A549 (cell line): ENCODE measurements at regions of chr6 and their contacts with region 1.

Region 1: GRCh38 chr6:14210663-14211561 is 93.3 kb downstream of the CD83 start:
- DNase-seq: peak; percentile 76 to 84
- ATAC-seq: peak; percentile 96
- H3K4me3 ChIP-seq: peak overlapping the region; percentile 56
- H3K27ac ChIP-seq: peak overlapping the region; percentile 88 to 93
- H3K4me1 ChIP-seq: peaks cover 30% of the 10 kb centered on the region
- CTCF ChIP-seq: peak; percentile 85
- EP300 ChIP-seq: no peak
- POLR2A ChIP-seq: peak; percentile 62
- RAD21 ChIP-seq: peak; percentile 67 to 97

Region 2: GRCh38 chr6:14089224-14089623 is 121.7 kb before region 1 on chr6:
- CTCF ChIA-PET with region 1: no interaction called
- POLR2A ChIA-PET with region 1: no interaction called
- DNase-seq: no peak
- ATAC-seq: no peak
- H3K4me3 ChIP-seq: no peak overlapping the region
- H3K27ac ChIP-seq: no peak overlapping the region
- H3K4me1 ChIP-seq: no peaks in the 10 kb centered on the region
- CTCF ChIP-seq: no peak
- EP300 ChIP-seq: no peak
- POLR2A ChIP-seq: no peak
- RAD21 ChIP-seq: no peak

Region 3: GRCh38 chr6:14224359-14225103 is 13.6 kb after region 1 on chr6:
- CTCF ChIA-PET with region 1: interaction called, 21 read pairs
- POLR2A ChIA-PET with region 1: no interaction called
- DNase-seq: no peak
- ATAC-seq: no peak
- H3K4me3 ChIP-seq: no peak overlapping the region
- H3K27ac ChIP-seq: no peak overlapping the region
- H3K4me1 ChIP-seq: no peaks in the 10 kb centered on the region
- CTCF ChIP-seq: no peak
- EP300 ChIP-seq: no peak
- POLR2A ChIP-seq: no peak
- RAD21 ChIP-seq: no peak